Endothelial cell of umbilical vein (primary cell): ENCODE measurements at regions of chr6 and their contacts with region 1.

Region 1: GRCh38 chr6:25017932-25018567 is 82.3 kb upstream of the RIPOR2 start:
- DNase-seq: peak; percentile 66
- H3K4me3 ChIP-seq: no peak overlapping the region
- H3K27ac ChIP-seq: no peak overlapping the region
- H3K4me1 ChIP-seq: no peaks in the 10 kb centered on the region
- H3K27me3 ChIP-seq: no peaks in the 10 kb centered on the region
- CTCF ChIP-seq: peak; percentile 39 to 40
- POLR2A ChIP-seq: no peak

Region 2: GRCh38 chr6:24720604-24721460 is 297.2 kb before region 1 on chr6:
- CTCF ChIA-PET with region 1: interaction called, 3 read pairs
- POLR2A ChIA-PET with region 1: no interaction called
- dilution Hi-C with region 1: no loop called
- intact Hi-C with region 1: loop called (anchors 10 kb)
- DNase-seq: peak; percentile 100
- H3K4me3 ChIP-seq: peak overlapping the region; percentile 81 to 89 (median 86)
- H3K27ac ChIP-seq: peak overlapping the region; percentile 97
- H3K4me1 ChIP-seq: peaks cover 34% of the 10 kb centered on the region
- H3K27me3 ChIP-seq: no peaks in the 10 kb centered on the region
- CTCF ChIP-seq: no peak
- POLR2A ChIP-seq: peak; percentile 98

Region 3: GRCh38 chr6:24734166-24734565 is 283.9 kb before region 1 on chr6:
- CTCF ChIA-PET with region 1: no interaction called
- POLR2A ChIA-PET with region 1: no interaction called
- dilution Hi-C with region 1: no loop called
- intact Hi-C with region 1: no loop called
- DNase-seq: no peak
- H3K4me3 ChIP-seq: no peak overlapping the region
- H3K27ac ChIP-seq: no peak overlapping the region
- H3K4me1 ChIP-seq: peaks cover 7% of the 10 kb centered on the region
- H3K27me3 ChIP-seq: no peaks in the 10 kb centered on the region
- CTCF ChIP-seq: no peak
- POLR2A ChIP-seq: no peak

Region 4: GRCh38 chr6:24855395-24856245 is 162.4 kb before region 1 on chr6:
- CTCF ChIA-PET with region 1: interaction called, 160 read pairs
- POLR2A ChIA-PET with region 1: no interaction called
- dilution Hi-C with region 1: no loop called
- intact Hi-C with region 1: loop called (anchors 1 kb)
- DNase-seq: peak; percentile 70
- H3K4me3 ChIP-seq: no peak overlapping the region
- H3K27ac ChIP-seq: no peak overlapping the region
- H3K4me1 ChIP-seq: no peaks in the 10 kb centered on the region
- H3K27me3 ChIP-seq: no peaks in the 10 kb centered on the region
- CTCF ChIP-seq: peak; percentile 74 to 76
- POLR2A ChIP-seq: no peak

Region 5: DNA sequence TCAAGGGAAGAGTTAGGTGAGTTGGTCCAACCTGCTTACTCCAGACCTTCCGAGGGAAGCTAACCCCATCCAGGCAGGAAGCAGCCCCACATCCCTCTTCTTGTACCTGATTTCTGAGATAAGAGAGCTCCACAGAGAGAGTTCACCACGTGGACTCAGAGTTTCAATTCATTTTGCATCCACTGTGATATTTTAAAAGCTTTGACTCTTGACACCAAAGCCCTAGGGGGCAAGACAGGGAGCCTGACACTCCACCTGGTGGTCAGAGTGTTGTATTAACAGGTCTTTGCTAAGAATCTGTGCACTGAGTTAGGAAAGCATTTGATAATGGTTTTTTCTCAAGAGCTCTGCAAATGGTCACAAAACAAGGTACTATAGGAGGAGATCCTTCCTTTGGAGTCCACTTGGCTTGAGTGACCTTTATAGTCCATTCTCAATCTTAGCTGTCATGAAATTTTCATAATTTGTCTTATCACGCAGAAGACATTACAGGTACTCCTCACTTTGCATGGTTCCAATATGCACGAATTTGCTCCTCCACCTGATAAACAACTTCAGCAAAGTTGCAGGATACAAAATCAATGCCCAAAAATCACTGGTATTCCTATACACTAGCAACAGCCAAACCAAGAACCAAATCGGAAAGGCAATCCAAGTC is 26.1 kb before region 1 on chr6:
- CTCF ChIA-PET with region 1: interaction called, 29 read pairs
- POLR2A ChIA-PET with region 1: no interaction called
- dilution Hi-C with region 1: no loop called
- intact Hi-C with region 1: no loop called
- DNase-seq: peak; percentile 28
- H3K4me3 ChIP-seq: no peak overlapping the region
- H3K27ac ChIP-seq: no peak overlapping the region
- H3K4me1 ChIP-seq: no peaks in the 10 kb centered on the region
- H3K27me3 ChIP-seq: no peaks in the 10 kb centered on the region
- CTCF ChIP-seq: peak; percentile 55 to 66
- POLR2A ChIP-seq: no peak

Region 6: GRCh38 chr6:25085756-25086155 is 67.7 kb after region 1 on chr6:
- CTCF ChIA-PET with region 1: no interaction called
- POLR2A ChIA-PET with region 1: no interaction called
- dilution Hi-C with region 1: no loop called
- intact Hi-C with region 1: no loop called
- DNase-seq: peak; percentile 95
- H3K4me3 ChIP-seq: no peak overlapping the region
- H3K27ac ChIP-seq: peak overlapping the region; percentile 68
- H3K4me1 ChIP-seq: peaks cover 46% of the 10 kb centered on the region
- H3K27me3 ChIP-seq: no peaks in the 10 kb centered on the region
- CTCF ChIP-seq: no peak
- POLR2A ChIP-seq: peak; percentile 65

Region 7: DNA sequence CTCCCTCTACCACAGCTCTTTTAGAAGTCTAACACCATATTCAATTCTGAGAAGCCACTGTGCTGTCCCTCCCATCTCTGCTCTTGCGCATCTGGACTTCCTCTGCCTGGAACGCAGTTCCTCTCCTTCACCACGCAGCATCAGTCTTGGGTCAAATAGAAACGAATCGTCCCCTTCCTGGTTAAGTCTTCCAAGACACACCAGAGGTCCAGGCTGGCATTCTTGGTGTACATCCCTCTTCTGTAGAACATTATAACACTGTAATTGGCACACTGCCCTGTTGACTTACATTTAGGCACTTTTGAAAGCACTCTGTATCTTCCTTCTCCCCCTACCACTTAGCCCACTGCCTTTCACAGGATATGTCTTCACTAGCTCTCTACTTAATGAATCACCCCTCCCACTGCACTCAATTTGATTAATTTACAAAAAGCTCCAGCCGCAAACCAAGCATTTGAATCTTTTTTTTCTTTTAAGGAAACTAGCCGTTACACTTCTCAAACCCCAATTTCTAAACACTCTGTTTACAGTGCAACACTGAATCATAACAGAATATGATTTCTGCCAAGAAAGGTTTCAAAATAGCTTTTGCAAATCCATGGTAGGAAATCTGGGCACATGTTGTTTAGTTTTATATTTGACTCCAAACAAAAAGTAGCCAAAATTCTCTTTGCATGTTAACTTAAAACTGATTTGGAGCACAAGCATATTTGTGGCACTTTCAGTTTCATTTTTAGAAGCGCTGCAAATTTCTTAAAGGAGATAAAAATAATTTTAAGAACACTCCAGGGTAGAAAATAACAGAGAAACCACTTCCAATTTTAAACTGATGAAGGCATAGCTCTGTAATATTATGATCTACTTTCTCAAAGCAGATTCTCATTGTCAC is 120.4 kb after region 1 on chr6:
- CTCF ChIA-PET with region 1: no interaction called
- POLR2A ChIA-PET with region 1: no interaction called
- dilution Hi-C with region 1: no loop called
- intact Hi-C with region 1: loop called (anchors 5 kb)
- DNase-seq: peak; percentile 84
- H3K4me3 ChIP-seq: peak overlapping the region; percentile 29 to 71 (median 43)
- H3K27ac ChIP-seq: peak overlapping the region; percentile 45
- H3K4me1 ChIP-seq: peaks cover 13% of the 10 kb centered on the region
- H3K27me3 ChIP-seq: no peaks in the 10 kb centered on the region
- CTCF ChIP-seq: peak in 1 of 2 donors; percentile 11
- POLR2A ChIP-seq: no peak

Region 8: GRCh38 chr6:26520853-26521599 is 1503.0 kb after region 1 on chr6:
- CTCF ChIA-PET with region 1: no interaction called
- POLR2A ChIA-PET with region 1: no interaction called
- dilution Hi-C with region 1: no loop called
- intact Hi-C with region 1: no loop called
- DNase-seq: peak; percentile 88
- H3K4me3 ChIP-seq: peak overlapping the region; percentile 46 to 82 (median 79)
- H3K27ac ChIP-seq: peak overlapping the region; percentile 76
- H3K4me1 ChIP-seq: peaks cover 10% of the 10 kb centered on the region
- H3K27me3 ChIP-seq: no peaks in the 10 kb centered on the region
- CTCF ChIP-seq: no peak
- POLR2A ChIP-seq: peak; percentile 68